ENCODE measurements at regions of chr16 and their contacts with region 1.

Region 1: GRCh38 chr16:71311553-71312158 is 22.5 kb upstream of the CMTR2 start:
- DNase-seq: peak; percentile 32
- H3K4me3 Mint-ChIP-seq: no peak overlapping the region
- H3K27ac Mint-ChIP-seq: no peak overlapping the region
- H3K4me1 Mint-ChIP-seq: peaks cover 22% of the 10 kb centered on the region
- H3K27me3 Mint-ChIP-seq: peaks cover 44% of the 10 kb centered on the region
- CTCF ChIP-seq: peak; percentile 96

Region 2: GRCh38 chr16:71214746-71215381 is 96.8 kb before region 1 on chr16:
- CTCF ChIA-PET with region 1: interaction called, 10 read pairs
- intact Hi-C with region 1: loop called (anchors 1 kb)
- DNase-seq: no peak
- H3K4me3 Mint-ChIP-seq: no peak overlapping the region
- H3K27ac Mint-ChIP-seq: no peak overlapping the region
- H3K4me1 Mint-ChIP-seq: no peaks in the 10 kb centered on the region
- H3K27me3 Mint-ChIP-seq: no peaks in the 10 kb centered on the region
- CTCF ChIP-seq: no peak

Region 3: DNA sequence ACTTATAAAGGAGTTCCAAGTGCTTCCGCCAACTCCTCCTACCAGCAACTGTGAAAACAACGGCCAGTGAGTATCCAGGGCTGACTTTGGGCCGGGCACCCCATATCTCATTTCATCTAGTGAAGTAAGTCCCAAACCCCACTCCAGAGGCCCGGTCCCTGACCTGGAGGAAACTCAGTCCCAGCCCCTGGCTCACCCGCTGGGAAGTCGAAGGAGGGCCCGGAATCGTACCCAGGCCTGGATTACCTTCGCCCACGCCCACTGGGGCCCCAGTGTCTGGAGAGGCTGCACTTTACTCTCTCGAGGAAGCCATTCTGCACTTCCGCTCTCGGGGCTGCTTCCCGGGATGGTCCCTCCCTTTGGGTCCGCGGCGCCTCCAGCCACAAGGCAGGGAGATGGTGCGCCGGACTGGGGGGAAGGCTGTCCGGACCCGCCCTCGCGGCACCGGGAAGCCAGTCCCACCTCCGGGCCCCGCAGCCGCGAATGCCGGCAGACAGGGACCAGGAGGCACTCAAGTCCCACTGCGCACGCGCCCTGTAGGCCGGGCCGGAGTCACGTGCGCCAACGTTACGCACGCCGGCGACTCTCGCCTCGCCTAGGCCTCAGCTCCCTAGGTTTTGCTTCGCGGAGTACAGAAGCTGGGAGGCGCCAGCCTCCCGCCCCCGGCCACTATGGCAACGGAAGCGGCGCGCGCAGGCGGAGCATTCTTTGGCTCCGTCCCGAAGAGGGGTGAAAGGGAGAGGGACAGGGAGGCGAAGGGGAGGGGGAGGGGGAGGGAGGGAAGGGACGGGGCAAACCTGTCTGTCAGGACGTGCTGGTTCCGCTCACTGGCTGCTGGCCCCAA is 22.5 kb before region 1 on chr16 and contains the start of gene CMTR2:
- CTCF ChIA-PET with region 1: interaction called, 18 read pairs
- intact Hi-C with region 1: no loop called
- DNase-seq: peak; percentile 97
- H3K4me3 Mint-ChIP-seq: peak within 1 kb of the TSS; percentile 66
- H3K27ac Mint-ChIP-seq: peak within 1 kb of the TSS; percentile 50
- H3K4me1 Mint-ChIP-seq: peaks cover 23% of the 10 kb centered on the region
- H3K27me3 Mint-ChIP-seq: no peaks in the 10 kb centered on the region
- CTCF ChIP-seq: no peak
- total RNA-seq, gene CMTR2: 44.4 and 45.0 TPM in 2 replicates

Region 4: DNA sequence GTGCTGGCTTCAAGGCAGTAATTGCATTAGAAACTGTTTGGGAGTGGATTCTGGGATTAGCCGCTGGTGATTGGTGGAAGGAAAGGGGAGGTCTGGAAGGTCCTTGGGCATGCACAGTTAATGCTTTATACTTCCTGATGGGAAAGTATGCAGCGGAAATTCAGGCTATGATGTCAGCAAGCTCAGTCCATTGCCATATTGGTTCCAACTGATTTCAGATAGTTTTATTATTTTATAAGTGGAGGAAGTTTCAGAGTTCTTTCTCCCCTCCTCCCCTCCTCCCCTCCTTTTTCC is 14.4 kb before region 1 on chr16:
- CTCF ChIA-PET with region 1: interaction called, 14 read pairs
- intact Hi-C with region 1: no loop called
- DNase-seq: peak; percentile 26
- H3K4me3 Mint-ChIP-seq: no peak overlapping the region
- H3K27ac Mint-ChIP-seq: no peak overlapping the region
- H3K4me1 Mint-ChIP-seq: peaks cover 22% of the 10 kb centered on the region
- H3K27me3 Mint-ChIP-seq: peaks cover 25% of the 10 kb centered on the region
- CTCF ChIP-seq: no peak

Region 5: DNA sequence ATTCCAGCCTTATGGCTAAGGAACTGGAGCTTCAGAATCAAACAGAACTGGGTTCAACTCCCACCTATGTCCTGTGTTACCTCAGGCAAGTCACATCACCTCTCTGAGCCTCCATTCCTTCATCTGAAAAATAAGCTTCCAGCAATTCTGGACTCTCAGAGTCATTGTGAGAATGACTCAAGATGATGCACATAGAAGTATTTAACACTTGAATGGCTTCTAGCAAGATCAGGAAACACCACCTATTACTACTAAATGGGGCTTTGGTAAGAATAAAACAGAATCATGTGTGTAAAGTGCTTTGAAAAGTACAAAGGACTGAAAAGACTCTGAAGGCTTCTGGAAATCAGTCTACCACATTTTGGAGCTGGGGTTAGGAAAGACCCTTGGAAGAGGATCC is 16.1 kb after region 1 on chr16:
- CTCF ChIA-PET with region 1: interaction called, 11 read pairs
- intact Hi-C with region 1: no loop called
- DNase-seq: no peak
- H3K4me3 Mint-ChIP-seq: no peak overlapping the region
- H3K27ac Mint-ChIP-seq: no peak overlapping the region
- H3K4me1 Mint-ChIP-seq: no peaks in the 10 kb centered on the region
- H3K27me3 Mint-ChIP-seq: no peaks in the 10 kb centered on the region
- CTCF ChIP-seq: no peak

Region 6: DNA sequence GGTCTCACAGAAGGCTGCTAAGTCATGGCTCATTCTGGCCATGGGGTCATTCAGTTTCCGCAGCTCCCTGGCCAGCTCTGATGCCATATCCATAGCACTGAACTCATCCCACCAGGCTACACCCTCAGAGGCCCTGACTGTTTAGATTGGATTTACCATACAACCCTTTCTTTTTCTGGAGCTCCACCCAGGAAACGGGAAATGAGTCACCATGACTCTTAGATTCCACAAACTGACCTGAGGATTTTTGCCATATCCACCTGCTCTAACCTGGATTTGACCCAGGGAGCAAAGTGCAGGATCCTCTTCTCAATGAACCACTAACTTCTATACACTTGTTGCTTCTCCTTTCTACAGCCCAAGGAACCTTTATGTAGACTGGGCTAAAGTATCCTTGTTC is 26.5 kb after region 1 on chr16:
- CTCF ChIA-PET with region 1: interaction called, 11 read pairs
- intact Hi-C with region 1: no loop called
- DNase-seq: peak; percentile 66
- H3K4me3 Mint-ChIP-seq: peak overlapping the region; percentile 41
- H3K27ac Mint-ChIP-seq: peak overlapping the region; percentile 99
- H3K4me1 Mint-ChIP-seq: peaks cover 57% of the 10 kb centered on the region
- H3K27me3 Mint-ChIP-seq: no peaks in the 10 kb centered on the region
- CTCF ChIP-seq: no peak

Region 7: GRCh38 chr16:71358464-71358998 is 46.9 kb after region 1 on chr16 and contains the start of gene CALB2:
- CTCF ChIA-PET with region 1: interaction called, 14 read pairs
- intact Hi-C with region 1: loop called (anchors 5 kb)
- DNase-seq: peak; percentile 91
- H3K4me3 Mint-ChIP-seq: peak within 1 kb of the TSS; percentile 82
- H3K27ac Mint-ChIP-seq: peak within 1 kb of the TSS; percentile 69
- H3K4me1 Mint-ChIP-seq: peaks cover 41% of the 10 kb centered on the region
- H3K27me3 Mint-ChIP-seq: no peaks in the 10 kb centered on the region
- CTCF ChIP-seq: peak; percentile 99
- total RNA-seq, gene CALB2: 16.6 and 35.1 TPM in 2 replicates